PC-3 (cell line): ENCODE measurements at regions of chr21 and their contacts with region 1.

Region 1: DNA sequence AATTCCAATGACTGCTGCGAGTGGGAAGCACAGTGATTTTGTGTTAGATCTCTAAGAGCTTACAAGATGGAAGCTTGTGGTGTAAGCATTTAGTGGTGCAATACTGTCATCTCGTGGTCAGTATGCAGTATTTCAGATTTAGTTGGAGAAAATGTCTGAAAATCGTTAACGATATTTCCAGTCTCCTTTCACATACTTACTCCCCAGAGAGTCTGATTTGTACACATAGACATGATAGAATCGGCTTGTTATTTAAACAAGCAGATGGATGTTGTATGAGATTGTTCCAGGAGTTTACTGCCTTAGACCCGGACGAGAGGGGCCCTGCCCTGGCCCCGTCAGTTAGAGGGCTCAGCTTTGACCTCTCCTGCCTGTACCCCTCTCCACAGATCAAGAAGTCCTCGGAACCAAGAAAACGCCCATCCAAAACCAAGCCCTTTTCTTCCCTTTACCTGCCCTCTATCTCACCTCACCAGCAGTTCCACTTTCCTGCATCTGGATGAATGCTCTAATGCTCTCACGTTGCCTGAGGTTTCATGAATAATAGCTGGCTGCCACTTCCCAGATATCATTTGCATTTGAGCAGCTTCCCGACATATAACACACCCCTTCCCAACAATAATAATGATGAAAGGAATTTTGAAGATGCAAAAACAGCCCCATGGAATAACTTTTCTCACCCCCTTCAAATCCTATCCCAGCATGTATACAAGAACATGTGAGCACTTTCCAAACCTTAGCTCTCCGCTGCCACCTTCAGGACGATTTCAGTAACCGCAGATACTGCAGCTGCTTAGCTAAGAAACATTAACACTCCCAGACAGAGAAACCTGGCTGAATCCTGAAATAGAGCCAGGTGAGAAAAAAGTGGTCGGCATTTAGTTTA is 247.3 kb downstream of the LTN1 start:
- DNase-seq: peak; percentile 92
- ATAC-seq: peak; percentile 86
- H3K4me3 ChIP-seq: peak overlapping the region; percentile 63
- H3K27ac ChIP-seq: peak overlapping the region; percentile 59
- H3K4me1 ChIP-seq: peaks cover 13% of the 10 kb centered on the region
- H3K27me3 ChIP-seq: no peaks in the 10 kb centered on the region
- CTCF ChIP-seq: peak; percentile 91

Region 2: DNA sequence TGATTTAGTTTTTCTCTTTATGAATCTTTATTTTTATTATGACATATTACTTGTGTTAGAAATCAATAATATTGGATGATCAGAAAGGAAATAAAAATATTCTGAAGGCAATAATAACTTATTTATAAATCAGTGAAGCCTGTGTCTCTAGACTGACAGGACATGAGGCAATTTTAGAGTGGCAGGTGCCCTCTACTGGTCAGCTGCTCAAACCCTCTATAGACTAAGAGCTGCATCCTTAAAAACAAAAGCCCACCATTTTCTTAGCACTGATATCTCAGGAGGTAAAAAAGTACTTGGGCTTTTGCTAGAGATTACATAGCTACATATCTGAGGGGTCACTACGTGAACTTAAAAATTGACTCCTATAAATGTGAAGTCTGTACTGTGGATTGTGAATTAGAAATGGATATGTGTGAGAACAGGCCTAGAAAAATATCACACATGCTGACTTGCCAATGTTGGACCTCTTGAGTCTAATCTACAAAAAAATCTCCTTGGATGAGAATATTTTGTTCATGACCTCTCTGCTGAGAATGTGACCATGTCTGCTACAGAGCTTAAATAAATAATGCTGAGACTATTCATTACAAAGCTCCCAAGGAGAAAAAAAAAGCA is 1180.6 kb before region 1 on chr21:
- CTCF ChIA-PET with region 1: no interaction called
- POLR2A ChIA-PET with region 1: no interaction called
- intact Hi-C with region 1: loop called (anchors 5 kb)
- DNase-seq: peak; percentile 52
- ATAC-seq: peak; percentile 99
- H3K4me3 ChIP-seq: no peak overlapping the region
- H3K27ac ChIP-seq: no peak overlapping the region
- H3K4me1 ChIP-seq: peaks cover 1% of the 10 kb centered on the region
- H3K27me3 ChIP-seq: no peaks in the 10 kb centered on the region
- CTCF ChIP-seq: peak; percentile 80

Region 3: GRCh38 chr21:28336314-28336713 is 409.1 kb before region 1 on chr21:
- CTCF ChIA-PET with region 1: interaction called, 28 read pairs
- POLR2A ChIA-PET with region 1: interaction called, 8 read pairs
- intact Hi-C with region 1: loop called (anchors 1 kb)
- DNase-seq: peak; percentile 76
- ATAC-seq: peak; percentile 53
- H3K4me3 ChIP-seq: no peak overlapping the region
- H3K27ac ChIP-seq: no peak overlapping the region
- H3K4me1 ChIP-seq: peaks cover 9% of the 10 kb centered on the region; the same call in 1 of the 2 replicates
- H3K27me3 ChIP-seq: no peaks in the 10 kb centered on the region
- CTCF ChIP-seq: peak; percentile 88

Region 4: DNA sequence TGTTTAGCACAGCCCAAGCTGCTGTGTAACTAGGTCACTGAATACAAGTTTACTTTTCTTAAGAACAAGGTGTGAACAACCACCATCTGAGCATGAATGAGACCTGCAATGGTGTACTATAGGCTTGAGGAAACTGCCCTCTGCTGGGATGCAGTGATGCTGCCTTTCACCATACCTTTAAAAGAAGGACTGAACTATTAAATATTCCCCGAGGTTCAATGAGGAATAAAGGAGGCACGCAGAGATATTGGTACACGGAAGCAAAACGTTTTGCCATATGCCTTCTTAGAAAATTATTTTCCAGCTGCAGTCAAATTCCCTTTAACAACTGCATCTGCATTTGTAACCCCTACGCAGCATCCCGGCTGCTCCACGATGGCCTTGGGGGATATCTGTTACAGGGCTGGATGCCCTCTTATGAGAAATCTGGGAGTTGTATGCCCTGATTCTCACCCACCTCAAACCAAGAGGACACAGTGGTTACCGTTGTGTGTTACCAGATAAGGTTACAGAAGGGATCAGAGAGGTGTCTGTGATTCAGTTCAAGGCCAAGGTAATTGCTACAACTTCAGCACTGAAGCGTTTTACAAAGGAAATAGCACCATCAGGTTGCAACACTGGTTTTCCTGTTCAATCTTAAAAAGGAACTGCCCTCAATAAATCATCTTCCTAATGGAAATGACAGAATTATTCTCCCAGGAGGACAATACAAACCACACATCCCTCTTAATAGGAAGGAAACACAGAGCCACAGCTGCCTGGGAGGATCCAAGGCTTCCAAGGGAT is 223.2 kb before region 1 on chr21:
- CTCF ChIA-PET with region 1: interaction called, 3 read pairs
- POLR2A ChIA-PET with region 1: no interaction called
- intact Hi-C with region 1: loop called (anchors 1 kb)
- DNase-seq: peak; percentile 54
- ATAC-seq: peak; percentile 75
- H3K4me3 ChIP-seq: no peak overlapping the region
- H3K27ac ChIP-seq: peak overlapping the region; percentile 38
- H3K4me1 ChIP-seq: peaks cover 18% of the 10 kb centered on the region
- H3K27me3 ChIP-seq: no peaks in the 10 kb centered on the region
- CTCF ChIP-seq: peak; percentile 71; the same call in 1 of the 2 replicates

Region 5: DNA sequence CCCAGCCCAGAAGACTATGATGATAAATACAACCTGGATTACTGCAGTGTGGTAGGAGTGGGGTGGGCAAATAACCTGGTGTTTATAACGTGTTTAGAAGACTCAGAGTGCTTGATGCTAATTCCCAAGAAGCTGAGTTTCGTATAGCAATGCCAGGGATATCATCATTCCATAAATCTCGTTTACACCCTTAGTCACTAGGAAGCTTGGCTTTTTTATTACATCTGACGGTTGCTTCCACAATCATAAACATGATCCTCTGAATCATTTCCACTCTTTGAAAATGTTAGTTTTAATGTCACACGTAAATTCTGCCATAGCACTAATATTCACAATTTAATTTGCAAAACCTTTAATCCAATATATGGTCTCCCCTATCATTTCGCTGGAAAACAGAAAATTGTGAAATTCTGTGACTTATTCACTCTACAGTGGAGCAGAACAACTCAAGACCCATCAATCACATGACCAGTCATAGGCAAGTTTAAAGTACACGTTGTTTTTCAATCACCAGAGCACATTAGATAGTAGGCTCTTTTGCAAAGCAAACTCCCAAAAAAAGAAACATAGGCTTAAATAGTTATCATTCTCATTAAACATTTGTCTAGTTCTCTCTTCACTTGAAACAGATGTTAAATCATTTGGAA is 73.7 kb before region 1 on chr21:
- CTCF ChIA-PET with region 1: no interaction called
- POLR2A ChIA-PET with region 1: no interaction called
- intact Hi-C with region 1: loop called (anchors 5 kb)
- DNase-seq: peak; percentile 84
- ATAC-seq: peak; percentile 87
- H3K4me3 ChIP-seq: no peak overlapping the region
- H3K27ac ChIP-seq: peak overlapping the region; percentile 92
- H3K4me1 ChIP-seq: peaks cover 29% of the 10 kb centered on the region
- H3K27me3 ChIP-seq: no peaks in the 10 kb centered on the region
- CTCF ChIP-seq: no peak

Region 6: DNA sequence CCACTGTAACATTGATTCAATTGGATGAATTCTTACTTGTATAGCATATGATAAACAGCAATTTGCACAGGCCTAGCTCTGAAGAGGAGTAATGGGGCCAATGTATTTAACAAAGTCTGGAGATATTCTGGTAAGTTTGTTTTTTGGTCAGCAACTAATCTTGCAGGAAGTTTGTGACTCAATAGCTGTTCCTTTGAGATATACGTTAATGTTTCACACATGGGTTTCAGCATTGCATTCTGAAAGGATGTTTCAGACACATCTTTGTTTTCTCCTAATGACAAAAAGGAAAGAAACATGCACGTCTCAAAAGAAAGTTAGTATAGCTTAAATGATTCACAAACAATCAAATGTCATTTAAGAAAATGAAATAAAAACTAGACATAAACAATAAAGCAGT is 198.3 kb after region 1 on chr21:
- CTCF ChIA-PET with region 1: no interaction called
- POLR2A ChIA-PET with region 1: no interaction called
- intact Hi-C with region 1: loop called (anchors 1 kb)
- DNase-seq: no peak
- ATAC-seq: no peak
- H3K4me3 ChIP-seq: no peak overlapping the region
- H3K27ac ChIP-seq: no peak overlapping the region
- H3K4me1 ChIP-seq: no peaks in the 10 kb centered on the region
- H3K27me3 ChIP-seq: no peaks in the 10 kb centered on the region
- CTCF ChIP-seq: no peak